PC-9 (cell line): ENCODE measurements at regions of chr6 and their contacts with region 1.

Region 1: GRCh38 chr6:34546551-34547321 is 9.4 kb downstream of the SPDEF start:
- DNase-seq: peak; percentile 62 to 73
- H3K4me3 ChIP-seq: no peak overlapping the region
- H3K27ac ChIP-seq: no peak overlapping the region
- H3K4me1 ChIP-seq: peaks cover 51% of the 10 kb centered on the region
- H3K27me3 ChIP-seq: no peaks in the 10 kb centered on the region
- CTCF ChIP-seq: no peak

Region 2: DNA sequence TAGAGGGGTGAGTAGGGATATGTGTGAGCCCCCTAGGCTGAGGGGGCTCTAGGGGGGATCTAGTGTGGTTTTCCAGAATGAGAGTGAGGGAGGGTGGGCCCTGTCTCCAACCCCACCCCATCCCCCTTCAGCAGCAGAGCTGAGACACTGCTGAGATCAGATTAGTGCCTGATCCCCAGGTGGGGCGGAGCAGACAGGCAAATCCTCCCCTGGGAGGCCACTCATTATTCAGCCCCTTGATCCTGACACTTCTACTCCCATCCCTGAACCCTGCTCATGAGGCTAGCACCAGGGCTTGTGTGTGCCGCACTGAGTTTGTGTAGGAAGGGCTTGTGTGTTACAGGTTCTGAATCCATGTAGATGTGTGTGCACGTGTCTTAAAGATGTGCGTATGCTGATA is 33.1 kb before region 1 on chr6:
- CTCF ChIA-PET with region 1: interaction called, 19 read pairs
- POLR2A ChIA-PET with region 1: no interaction called
- intact Hi-C with region 1: no loop called
- DNase-seq: no peak
- H3K4me3 ChIP-seq: no peak overlapping the region
- H3K27ac ChIP-seq: no peak overlapping the region
- H3K4me1 ChIP-seq: no peaks in the 10 kb centered on the region
- H3K27me3 ChIP-seq: no peaks in the 10 kb centered on the region
- CTCF ChIP-seq: no peak

Region 3: DNA sequence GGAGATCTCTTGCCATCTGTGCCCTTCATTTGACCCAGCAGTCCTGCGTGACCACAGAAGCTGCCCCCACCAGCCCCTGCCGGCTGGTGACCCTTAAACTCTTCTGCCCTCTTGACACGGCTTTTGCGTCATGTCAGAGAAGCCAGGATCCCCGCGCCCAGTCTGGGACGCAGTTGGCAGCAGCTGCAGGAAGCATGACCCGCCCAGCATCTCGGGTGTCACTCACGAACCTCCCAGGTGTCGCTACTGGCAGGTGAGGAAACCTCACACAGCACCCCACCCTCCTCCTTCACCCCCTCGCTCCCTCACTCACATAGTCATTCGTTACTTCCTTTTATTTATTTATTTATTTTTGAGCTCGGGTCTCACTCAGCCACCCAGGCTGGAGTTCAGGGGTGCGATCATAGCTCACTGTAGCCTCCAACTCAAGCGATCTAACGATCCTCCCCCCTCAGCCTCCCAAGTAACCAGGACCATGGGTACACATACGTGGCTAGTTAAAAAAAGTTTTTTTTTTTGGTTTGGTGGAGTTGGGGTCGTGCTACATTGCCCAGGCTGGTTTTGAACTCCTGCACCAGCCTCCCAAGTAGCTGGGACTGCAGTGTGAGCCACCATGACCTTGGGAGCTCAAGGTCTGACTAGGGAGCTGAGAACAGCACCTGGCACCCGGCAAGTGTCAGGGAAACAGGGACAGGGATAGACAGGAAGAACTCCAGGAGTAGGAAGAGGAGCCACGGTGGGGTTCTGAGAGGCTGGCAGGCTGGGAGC is 23.5 kb after region 1 on chr6:
- CTCF ChIA-PET with region 1: interaction called, 15 read pairs
- POLR2A ChIA-PET with region 1: no interaction called
- intact Hi-C with region 1: no loop called
- DNase-seq: peak in 1 of 2 experiments; percentile 16
- H3K4me3 ChIP-seq: no peak overlapping the region
- H3K27ac ChIP-seq: no peak overlapping the region
- H3K4me1 ChIP-seq: peaks cover 24% of the 10 kb centered on the region
- H3K27me3 ChIP-seq: no peaks in the 10 kb centered on the region
- CTCF ChIP-seq: no peak